IMR-90 (cell line): ENCODE measurements at regions of chr2 and their contacts with region 1.

Region 1: DNA sequence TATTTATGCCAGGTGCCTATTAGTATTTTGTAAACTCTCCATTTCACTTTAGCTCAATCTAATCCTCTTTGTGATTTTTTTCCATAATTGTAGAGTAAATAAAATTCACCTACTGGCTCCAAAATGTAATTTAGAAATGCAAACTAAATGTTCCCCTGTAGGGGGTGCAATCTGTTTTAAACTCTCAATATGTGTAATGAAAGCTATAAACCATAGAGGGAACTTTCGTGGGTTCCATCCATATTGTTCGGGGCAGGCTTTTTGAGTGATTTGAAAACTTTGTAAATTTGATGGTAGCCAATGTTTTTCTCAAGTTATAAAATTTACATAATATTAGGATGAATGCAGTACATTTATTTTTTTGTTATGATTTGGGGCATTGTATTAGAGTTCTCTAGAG is 49.4 kb downstream of the TSPYL6 start:
- DNase-seq: peak; percentile 46
- ATAC-seq: peak; percentile 42; the same call in 1 of the 2 replicates
- H3K4me3 ChIP-seq: no peak overlapping the region
- H3K27ac ChIP-seq: no peak overlapping the region
- H3K4me1 ChIP-seq: peaks cover 6% of the 10 kb centered on the region; the same call in 1 of the 2 replicates
- H3K27me3 ChIP-seq: no peaks in the 10 kb centered on the region
- CTCF ChIP-seq: peak; percentile 60
- POLR2A ChIP-seq: no peak
- RAD21 ChIP-seq: peak; percentile 56

Region 2: DNA sequence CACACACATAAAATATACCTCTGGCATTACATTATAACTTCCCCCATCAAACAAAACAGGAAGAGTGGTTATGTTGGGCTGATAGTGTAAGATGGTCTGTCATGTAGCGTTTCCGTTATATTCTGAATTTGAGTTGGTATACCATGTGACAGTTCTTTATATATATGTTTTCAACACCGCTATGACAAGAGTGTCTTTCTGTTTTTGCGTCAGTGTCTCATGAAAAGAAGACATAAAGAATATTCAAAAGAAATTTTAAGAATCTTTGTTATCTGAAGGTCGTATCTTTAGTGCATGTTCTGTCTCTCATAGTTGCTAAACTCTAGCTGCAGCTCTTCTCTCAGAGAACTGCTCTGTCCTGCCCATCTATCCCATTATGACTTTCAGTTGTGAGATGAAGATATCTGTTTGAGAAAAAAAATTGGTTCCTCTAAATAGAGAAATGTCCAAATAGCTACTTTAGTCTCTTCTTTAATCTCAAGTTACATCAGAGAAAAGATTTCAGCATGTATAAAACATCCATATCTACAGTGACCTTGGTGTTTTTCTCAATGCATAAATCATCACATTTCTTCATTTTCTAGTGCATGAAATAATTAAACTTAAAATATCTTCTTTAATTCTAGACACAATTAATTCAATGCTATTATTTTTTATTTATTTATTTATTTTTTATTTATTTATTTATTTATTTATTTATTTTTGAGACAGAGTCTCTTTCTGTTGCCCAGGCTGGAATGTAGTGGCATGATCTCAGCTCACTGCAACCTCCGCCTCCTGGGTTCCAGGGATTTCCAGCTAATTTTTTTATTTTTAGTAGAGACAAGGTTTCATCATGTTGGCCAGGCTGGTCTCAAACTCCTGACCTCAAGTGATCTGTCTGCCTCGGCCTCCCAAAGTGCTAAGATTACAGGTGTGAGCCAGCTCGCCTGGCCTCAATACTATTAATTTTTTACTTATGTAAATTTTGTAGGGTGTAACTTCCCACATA is 211.5 kb before region 1 on chr2:
- CTCF ChIA-PET with region 1: no interaction called
- POLR2A ChIA-PET with region 1: no interaction called
- dilution Hi-C with region 1: no loop called
- in situ Hi-C with region 1: no loop called
- intact Hi-C with region 1: no loop called
- DNase-seq: no peak
- ATAC-seq: no peak
- H3K4me3 ChIP-seq: no peak overlapping the region
- H3K27ac ChIP-seq: no peak overlapping the region
- H3K4me1 ChIP-seq: no peaks in the 10 kb centered on the region
- H3K27me3 ChIP-seq: no peaks in the 10 kb centered on the region
- CTCF ChIP-seq: no peak
- POLR2A ChIP-seq: no peak
- RAD21 ChIP-seq: no peak

Region 3: DNA sequence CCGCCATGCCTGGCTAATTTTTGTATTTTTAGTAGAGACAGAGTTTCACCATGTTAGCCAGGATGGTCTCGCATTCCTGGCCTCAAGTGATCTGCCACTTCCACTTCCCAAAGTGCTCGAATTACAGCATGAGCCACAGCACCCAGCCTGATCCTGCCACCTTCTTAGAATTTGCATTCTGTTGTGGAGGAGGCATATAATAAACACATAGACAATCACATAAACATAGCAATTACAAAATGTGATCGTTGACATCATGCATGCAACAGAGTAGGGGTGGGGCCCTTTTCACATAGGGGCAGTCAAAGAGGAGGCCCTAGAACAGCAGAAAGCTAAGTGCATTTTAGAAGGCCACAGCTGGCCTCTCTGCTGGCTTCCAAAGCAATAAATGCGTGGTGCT is 89.3 kb after region 1 on chr2:
- CTCF ChIA-PET with region 1: no interaction called
- POLR2A ChIA-PET with region 1: no interaction called
- dilution Hi-C with region 1: no loop called
- in situ Hi-C with region 1: no loop called
- intact Hi-C with region 1: no loop called
- DNase-seq: no peak
- ATAC-seq: peak; percentile 66
- H3K4me3 ChIP-seq: no peak overlapping the region
- H3K27ac ChIP-seq: no peak overlapping the region
- H3K4me1 ChIP-seq: peaks cover 2% of the 10 kb centered on the region; the same call in 1 of the 2 replicates
- H3K27me3 ChIP-seq: peaks cover 2% of the 10 kb centered on the region; the same call in 1 of the 2 replicates
- CTCF ChIP-seq: no peak
- POLR2A ChIP-seq: no peak
- RAD21 ChIP-seq: no peak

Region 4: DNA sequence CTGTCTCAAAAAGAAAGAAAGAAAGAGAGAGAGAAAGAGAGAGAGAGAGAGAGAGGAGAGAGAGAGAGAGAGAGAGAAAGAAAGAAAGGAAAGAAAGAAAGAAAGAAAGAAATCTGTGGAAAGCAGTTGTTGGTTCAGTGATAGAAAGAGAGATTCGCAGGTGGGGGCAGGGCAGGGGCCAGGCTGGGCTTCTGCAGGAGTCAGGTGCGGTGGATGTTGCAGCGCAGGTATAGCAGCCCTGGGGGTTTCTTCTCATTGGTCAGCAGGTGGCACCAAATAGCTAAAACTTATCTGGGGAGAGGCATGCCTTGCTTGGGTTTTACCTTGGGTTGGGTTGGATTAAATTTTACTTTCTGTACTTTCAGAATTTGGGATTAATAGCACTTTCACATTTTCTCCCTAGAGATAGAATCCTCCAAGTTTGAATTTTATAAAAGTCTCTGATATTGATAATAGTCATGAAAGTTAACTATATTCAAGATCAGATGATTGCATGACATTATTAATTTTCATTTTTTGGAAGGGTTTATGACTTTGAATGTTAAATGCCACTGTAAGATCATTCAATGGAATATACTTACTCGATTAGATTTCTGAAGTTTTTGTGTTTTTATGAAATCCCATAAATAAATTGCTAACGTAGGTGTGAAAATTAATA is 316.2 kb after region 1 on chr2:
- CTCF ChIA-PET with region 1: no interaction called
- POLR2A ChIA-PET with region 1: no interaction called
- dilution Hi-C with region 1: no loop called
- in situ Hi-C with region 1: no loop called
- intact Hi-C with region 1: loop called (anchors 10 kb)
- DNase-seq: peak; percentile 59
- ATAC-seq: no peak
- H3K4me3 ChIP-seq: no peak overlapping the region
- H3K27ac ChIP-seq: no peak overlapping the region
- H3K4me1 ChIP-seq: peaks cover 12% of the 10 kb centered on the region
- H3K27me3 ChIP-seq: no peaks in the 10 kb centered on the region
- CTCF ChIP-seq: peak; percentile 61
- POLR2A ChIP-seq: no peak
- RAD21 ChIP-seq: peak; percentile 75